Gastrocnemius medialis (tissue), 4 donors: ENCODE measurements at regions of chr3 and their contacts with region 1.

Region 1: DNA sequence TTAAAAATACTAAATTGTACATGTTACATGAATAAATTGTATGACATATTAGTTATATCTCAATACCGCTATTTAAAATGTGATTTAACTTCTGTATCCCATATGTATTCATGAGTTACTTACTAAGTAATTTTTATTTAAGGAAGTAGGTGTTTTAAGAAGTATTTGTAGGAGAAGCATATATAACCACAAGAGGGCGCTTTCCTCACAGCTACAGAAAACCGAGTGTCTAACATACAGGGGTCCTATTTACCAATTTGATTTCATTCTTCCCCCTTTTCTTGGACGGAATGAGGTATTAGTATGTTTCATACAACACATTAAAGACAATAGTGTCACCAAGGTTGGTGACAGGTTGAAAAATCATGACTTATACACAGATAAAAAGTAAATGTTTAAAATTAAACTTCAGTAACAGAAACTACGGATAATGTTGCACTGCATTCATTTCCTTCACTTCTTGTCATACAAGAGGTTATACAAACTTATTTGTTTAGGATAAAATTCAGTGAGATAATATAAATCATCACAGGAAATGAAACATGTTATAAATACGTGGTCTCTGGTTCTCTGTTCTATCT is 253.6 kb downstream of the MAGI1 start:
- DNase-seq: no peak
- ATAC-seq: no peak
- H3K4me3 ChIP-seq: no peak overlapping the region
- H3K27ac ChIP-seq: no peak overlapping the region
- H3K4me1 ChIP-seq: peaks cover 0 to 4% of the 10 kb centered on the region in 2 donors
- H3K27me3 ChIP-seq: no peaks in the 10 kb centered on the region
- CTCF ChIP-seq: peak; percentile 52 to 77 (median 59)
- POLR2A ChIP-seq: no peak

Region 2: GRCh38 chr3:65914740-65915367 is 129.7 kb after region 1 on chr3:
- in situ Hi-C with region 1: no loop called
- intact Hi-C with region 1: loop called (anchors 5 kb)
- DNase-seq: no peak
- ATAC-seq: peak in 1 of 2 donors; percentile 33
- H3K4me3 ChIP-seq: no peak overlapping the region
- H3K27ac ChIP-seq: no peak overlapping the region
- H3K4me1 ChIP-seq: peaks cover 0 to 22% of the 10 kb centered on the region in 2 donors
- H3K27me3 ChIP-seq: no peaks in the 10 kb centered on the region
- CTCF ChIP-seq: no peak
- POLR2A ChIP-seq: no peak

Region 3: GRCh38 chr3:66038726-66039589 is 253.8 kb after region 1 on chr3 and contains the start of gene MAGI1:
- in situ Hi-C with region 1: no loop called
- intact Hi-C with region 1: loop called (anchors 5 kb)
- DNase-seq: peak; percentile 78 to 89
- ATAC-seq: peak; percentile 87 to 92
- H3K4me3 ChIP-seq: peak within 1 kb of the TSS; percentile 91 to 99 (median 96)
- H3K27ac ChIP-seq: peak within 1 kb of the TSS; percentile 93 to 97 (median 95)
- H3K4me1 ChIP-seq: peaks cover 18 to 21% of the 10 kb centered on the region in 2 donors
- H3K27me3 ChIP-seq: no peaks in the 10 kb centered on the region
- CTCF ChIP-seq: no peak
- POLR2A ChIP-seq: peak; percentile 64 to 83
- total RNA-seq, gene MAGI1: 2.6 to 7.5 (median 3.9) TPM

Region 4: DNA sequence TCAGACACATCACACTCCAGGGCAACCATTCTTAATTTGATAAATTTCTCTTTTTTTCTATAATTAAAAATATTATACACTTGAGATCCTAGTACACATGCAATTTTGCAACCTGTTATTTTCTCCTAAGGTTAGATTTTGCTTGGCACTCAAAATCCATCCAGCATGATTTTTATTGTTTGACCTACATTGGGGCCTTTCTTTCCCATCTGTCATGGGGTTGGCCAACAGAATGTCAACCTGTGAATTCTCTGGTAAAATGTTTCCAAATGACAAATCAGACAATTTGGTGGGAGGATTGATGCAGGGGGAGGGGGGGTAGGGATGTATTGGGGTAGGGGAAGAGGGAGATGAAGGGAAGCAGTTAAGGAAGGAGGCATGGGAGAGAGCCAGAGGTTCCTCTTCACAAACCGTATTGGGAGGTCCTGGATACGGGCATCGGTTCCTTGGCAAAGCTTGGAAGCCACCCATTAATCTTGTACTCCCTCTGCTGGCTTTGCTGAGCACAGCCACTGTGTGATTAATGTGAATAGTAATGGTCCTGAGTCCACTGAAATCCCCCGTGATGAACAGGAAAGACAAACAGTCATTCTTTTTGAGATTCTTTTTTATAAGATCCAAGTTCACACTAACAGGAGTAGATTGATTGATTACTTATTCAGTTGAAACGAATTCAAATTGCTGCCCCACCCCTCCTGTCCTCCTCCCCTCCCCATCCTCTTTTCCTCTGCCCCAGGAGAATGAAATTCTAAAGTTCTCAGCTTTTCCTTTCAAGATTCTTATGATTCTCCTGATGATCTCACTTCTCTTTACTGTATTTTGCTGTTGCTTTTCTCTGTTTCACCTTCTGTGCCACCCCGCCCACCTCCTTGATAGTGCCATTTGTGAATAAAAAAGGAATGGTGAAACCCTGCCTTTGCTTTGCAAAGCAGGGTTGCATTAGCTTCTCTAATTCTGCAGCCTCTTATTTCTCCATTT is 353.5 kb after region 1 on chr3:
- in situ Hi-C with region 1: loop called (anchors 5 to 10 kb)
- intact Hi-C with region 1: loop called (anchors 1 kb)
- DNase-seq: peak; percentile 19 to 20
- ATAC-seq: peak; percentile 80 to 84
- H3K4me3 ChIP-seq: no peak overlapping the region
- H3K27ac ChIP-seq: no peak overlapping the region
- H3K4me1 ChIP-seq: no peaks in the 10 kb centered on the region
- H3K27me3 ChIP-seq: no peaks in the 10 kb centered on the region
- CTCF ChIP-seq: peak; percentile 61 to 79 (median 65)
- POLR2A ChIP-seq: no peak

Region 5: GRCh38 chr3:66196633-66197032 is 411.5 kb after region 1 on chr3:
- in situ Hi-C with region 1: no loop called
- intact Hi-C with region 1: loop called (anchors 1 kb)
- DNase-seq: no peak
- ATAC-seq: no peak
- H3K4me3 ChIP-seq: no peak overlapping the region
- H3K27ac ChIP-seq: no peak overlapping the region
- H3K4me1 ChIP-seq: no peaks in the 10 kb centered on the region
- H3K27me3 ChIP-seq: no peaks in the 10 kb centered on the region
- CTCF ChIP-seq: peak in 2 of 5 experiments; percentile 22 to 30
- POLR2A ChIP-seq: no peak